ENCODE measurements at regions of chr6 and their contacts with region 1.

Region 1: GRCh38 chr6:108782179-108783041 is 65.8 kb upstream of the ARMC2 start:
- DNase-seq: peak; percentile 87 to 88
- ATAC-seq: peak; percentile 94 to 99
- H3K4me3 ChIP-seq: peak overlapping the region; percentile 40 to 68 (median 58)
- H3K27ac ChIP-seq: peak overlapping the region; percentile 45 to 71 (median 56)
- H3K4me1 ChIP-seq: peaks cover 5 to 12% of the 10 kb centered on the region in 2 donors
- H3K27me3 ChIP-seq: no peaks in the 10 kb centered on the region
- CTCF ChIP-seq: peak; percentile 45 to 69 (median 66)
- POLR2A ChIP-seq: no peak

Region 2: DNA sequence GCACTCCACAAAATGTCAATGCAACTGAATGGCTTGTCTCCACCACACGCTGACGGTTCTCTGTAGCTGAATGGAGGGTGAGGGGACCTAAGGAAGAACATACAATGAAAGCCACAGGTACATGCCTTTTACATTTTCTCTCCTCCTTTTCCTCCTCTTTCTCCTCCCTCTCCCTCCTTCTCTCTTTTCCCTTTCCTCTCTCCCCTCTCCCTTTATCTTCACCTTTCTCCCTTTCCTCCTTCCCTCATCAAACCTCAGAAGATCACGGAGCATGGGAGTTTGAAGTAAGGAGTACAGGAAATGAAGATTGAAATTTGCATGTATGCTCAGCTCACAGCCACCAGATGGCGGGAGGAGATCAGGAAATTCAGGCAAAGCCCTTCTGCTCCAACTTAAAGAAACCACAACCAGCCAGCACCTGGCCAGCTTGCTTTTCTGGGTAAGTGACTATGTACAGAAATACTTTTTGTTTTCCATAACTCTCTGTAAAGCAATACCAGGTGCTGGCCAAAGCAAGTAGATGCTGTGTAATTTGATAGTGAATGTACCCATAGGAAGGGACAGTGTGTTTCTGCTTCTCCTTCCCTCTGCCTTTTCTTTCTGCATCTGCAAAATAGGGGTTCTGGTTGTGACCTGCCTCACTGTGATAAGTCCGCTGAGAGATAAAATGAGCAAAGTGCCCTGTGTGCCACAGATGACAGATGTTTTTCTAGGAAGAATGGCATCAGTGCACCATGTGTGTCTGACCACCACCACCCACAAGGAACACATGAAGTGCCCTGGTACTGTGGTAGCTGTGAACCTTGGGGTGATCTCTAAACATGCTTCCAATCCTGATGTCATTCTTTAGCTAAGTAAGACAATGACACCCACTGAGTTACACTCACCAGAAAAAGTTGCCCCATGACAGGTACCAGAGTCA is 240.3 kb before region 1 on chr6:
- in situ Hi-C with region 1: loop called (anchors 5 to 10 kb)
- intact Hi-C with region 1: loop called (anchors 1 kb)
- DNase-seq: peak; percentile 76 to 86
- ATAC-seq: peak; percentile 90 to 94
- H3K4me3 ChIP-seq: no peak overlapping the region
- H3K27ac ChIP-seq: peak overlapping the region; percentile 54 to 86 (median 75)
- H3K4me1 ChIP-seq: peaks cover 26 to 29% of the 10 kb centered on the region in 2 donors
- H3K27me3 ChIP-seq: no peaks in the 10 kb centered on the region
- CTCF ChIP-seq: peak; percentile 80 to 95 (median 89)
- POLR2A ChIP-seq: no peak

Region 3: GRCh38 chr6:108558372-108559096 is 223.9 kb before region 1 on chr6:
- in situ Hi-C with region 1: no loop called
- intact Hi-C with region 1: loop called (anchors 5 kb)
- DNase-seq: peak; percentile 98 to 99
- ATAC-seq: peak; percentile 36 to 40
- H3K4me3 ChIP-seq: peak overlapping the region; percentile 81 to 99 (median 94)
- H3K27ac ChIP-seq: peak overlapping the region; percentile 95 to 100 (median 100)
- H3K4me1 ChIP-seq: peaks cover 29 to 30% of the 10 kb centered on the region in 2 donors
- H3K27me3 ChIP-seq: no peaks in the 10 kb centered on the region
- CTCF ChIP-seq: no peak
- POLR2A ChIP-seq: peak; percentile 66 to 94

Region 4: DNA sequence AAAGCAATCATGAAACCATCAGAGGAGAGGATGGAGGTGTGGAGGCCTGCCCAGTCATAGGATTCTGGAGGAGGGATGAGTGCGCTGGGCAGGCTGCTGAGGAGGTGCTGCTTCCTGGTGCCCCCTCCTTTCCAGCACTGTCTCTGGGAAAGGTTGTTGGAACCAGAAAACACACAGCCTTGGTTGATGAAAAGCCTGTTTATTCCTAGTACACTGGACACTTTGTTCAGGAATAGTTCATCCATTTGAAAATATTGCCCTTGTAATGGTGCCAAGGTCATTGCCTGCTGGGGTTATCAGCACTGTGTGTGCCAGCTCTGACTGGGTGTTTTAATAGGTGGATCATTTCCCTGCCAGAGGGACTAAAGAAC is 17.8 kb before region 1 on chr6:
- in situ Hi-C with region 1: no loop called
- intact Hi-C with region 1: no loop called
- DNase-seq: no peak
- ATAC-seq: no peak
- H3K4me3 ChIP-seq: no peak overlapping the region
- H3K27ac ChIP-seq: no peak overlapping the region
- H3K4me1 ChIP-seq: peaks cover 6 to 19% of the 10 kb centered on the region in 2 donors
- H3K27me3 ChIP-seq: no peaks in the 10 kb centered on the region
- CTCF ChIP-seq: no peak
- POLR2A ChIP-seq: no peak

Region 5: DNA sequence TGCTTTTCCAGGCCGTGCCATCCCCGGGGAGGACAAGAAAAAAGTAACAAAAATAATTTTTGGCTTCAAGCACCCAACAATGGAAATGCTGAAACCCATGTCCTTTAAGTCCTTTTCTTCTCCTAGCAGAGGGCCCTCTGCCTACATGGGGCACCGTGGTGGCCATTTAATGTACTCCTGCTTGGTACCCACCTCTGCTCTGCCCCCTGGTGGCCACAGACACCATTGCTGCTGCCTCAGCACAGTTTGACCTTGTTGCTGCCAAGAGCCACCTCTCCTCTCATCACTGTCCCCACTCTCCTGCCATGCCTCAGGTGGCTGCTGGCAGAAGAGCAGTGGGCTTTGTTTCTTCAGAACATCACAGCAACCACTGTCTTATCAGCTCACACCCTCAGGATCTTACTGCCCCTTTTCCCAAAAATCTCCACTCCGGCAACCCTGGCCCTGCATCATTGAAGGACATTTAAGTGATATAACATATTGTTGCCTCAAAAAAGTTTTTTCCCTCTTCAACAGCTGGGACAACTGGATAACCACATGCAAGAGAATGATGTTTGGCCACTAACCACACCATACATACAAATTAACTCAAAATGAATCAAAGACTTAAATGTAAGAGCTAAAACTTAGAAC is 52.9 kb after region 1 on chr6:
- in situ Hi-C with region 1: no loop called
- intact Hi-C with region 1: loop called (anchors 5 kb)
- DNase-seq: peak; percentile 80 to 89
- ATAC-seq: peak; percentile 92 to 99
- H3K4me3 ChIP-seq: no peak overlapping the region
- H3K27ac ChIP-seq: peak overlapping the region in 3 of 4 donors; percentile 19 to 59 (median 40)
- H3K4me1 ChIP-seq: peaks cover 6% of the 10 kb centered on the region in 2 donors
- H3K27me3 ChIP-seq: no peaks in the 10 kb centered on the region
- CTCF ChIP-seq: peak; percentile 91 to 97 (median 92)
- POLR2A ChIP-seq: no peak

Region 6: DNA sequence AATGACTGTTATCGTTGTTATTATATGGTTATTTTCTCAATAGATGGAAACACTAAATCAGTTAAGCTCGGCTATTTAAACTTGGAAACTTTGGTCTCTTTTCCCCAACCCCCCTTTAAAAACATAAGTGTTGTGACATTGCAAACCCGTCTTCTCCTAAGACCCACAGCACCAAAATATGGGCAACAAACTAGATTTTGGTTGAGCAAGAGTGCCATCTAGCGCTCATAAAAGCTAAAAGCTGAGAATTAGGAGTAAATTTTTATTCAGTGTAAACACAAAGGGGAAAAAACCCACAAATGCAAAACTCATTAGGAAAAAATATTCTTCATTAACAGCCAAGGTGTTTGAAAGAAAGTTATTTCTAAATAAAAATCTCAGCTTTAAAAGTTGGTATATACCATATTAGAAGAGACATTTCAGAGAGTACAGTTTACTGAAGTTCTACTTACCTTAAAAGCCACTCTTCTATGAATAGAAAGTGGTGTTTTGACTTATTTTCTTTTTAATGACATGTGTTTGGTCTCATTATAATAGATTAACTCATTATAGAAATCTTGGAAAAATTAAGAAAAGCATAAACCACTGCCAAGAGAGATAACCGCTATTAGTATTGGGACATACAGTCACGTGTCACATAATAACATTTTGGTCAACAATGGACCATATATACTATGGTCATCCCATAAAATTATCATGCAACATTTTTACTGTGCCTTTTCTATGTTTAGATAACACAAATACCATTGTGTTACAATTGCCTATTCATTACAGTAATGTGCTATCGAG is 291.1 kb after region 1 on chr6:
- in situ Hi-C with region 1: no loop called
- intact Hi-C with region 1: loop called (anchors 10 kb)
- DNase-seq: peak in 1 of 2 donors; percentile 34
- ATAC-seq: peak; percentile 66 to 84
- H3K4me3 ChIP-seq: peak overlapping the region in 1 of 4 donors; percentile 4
- H3K27ac ChIP-seq: peak overlapping the region; percentile 37 to 98 (median 57)
- H3K4me1 ChIP-seq: peaks cover 82 to 94% of the 10 kb centered on the region in 2 donors
- H3K27me3 ChIP-seq: no peaks in the 10 kb centered on the region
- CTCF ChIP-seq: peak; percentile 61 to 73 (median 67)
- POLR2A ChIP-seq: no peak